ENCODE measurements at regions of chr16 and their contacts with region 1.

Region 1: DNA sequence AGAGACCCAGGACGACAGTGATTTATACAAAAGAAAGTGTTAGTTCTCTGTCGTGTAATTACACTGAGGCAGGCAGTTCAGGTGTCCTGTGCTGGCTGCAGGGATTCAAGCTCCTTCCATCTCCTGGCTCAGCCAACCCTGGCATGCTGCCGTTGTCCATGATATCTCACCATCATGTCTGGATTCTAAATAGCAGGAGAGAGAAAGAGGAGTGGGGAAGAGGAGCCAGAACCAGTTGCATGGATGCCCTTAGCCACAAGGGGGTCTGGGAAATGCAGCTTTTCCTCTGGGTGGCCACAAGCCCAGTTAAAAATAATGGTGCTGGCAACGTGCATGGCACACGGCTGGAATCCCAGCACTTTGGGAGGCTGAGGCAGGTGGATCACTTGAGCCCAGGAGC is 9.7 kb downstream of the C16orf54 start:
- DNase-seq: no peak
- H3K4me3 ChIP-seq: no peak overlapping the region
- H3K27ac ChIP-seq: no peak overlapping the region
- H3K4me1 ChIP-seq: peaks cover 8% of the 10 kb centered on the region
- H3K27me3 ChIP-seq: no peaks in the 10 kb centered on the region
- CTCF ChIP-seq: no peak; the same call in 1 of the 2 replicates

Region 2: DNA sequence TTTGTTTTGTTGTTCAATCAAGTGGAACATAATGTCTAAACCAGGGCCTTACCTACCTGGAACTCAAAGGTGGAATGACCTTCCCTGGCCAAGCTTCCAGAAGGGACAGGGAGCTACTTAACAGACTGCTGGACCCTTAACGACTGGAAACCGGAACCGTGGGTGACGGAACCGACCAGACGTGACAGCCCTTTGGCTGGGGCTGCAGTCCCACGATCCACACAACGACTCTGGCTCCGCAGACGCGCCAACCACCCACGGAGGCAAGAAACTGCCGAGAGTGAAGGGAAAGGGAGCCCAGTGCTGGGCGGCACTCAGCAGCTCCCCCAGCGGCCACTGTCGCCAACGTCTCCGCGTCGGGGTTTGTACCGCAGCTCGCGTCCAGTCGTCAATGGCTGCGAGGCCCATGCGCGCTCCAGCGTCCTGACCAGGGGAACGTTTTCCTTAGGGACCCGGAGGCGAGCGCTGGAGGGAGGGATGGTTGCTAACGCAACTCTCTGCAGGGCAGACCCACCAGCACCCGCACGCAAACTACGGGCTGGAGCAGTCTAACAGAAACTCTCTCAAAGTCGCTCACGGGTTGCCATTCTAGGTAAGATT is 48.9 kb after region 1 on chr16:
- CTCF ChIA-PET with region 1: interaction called, 19 read pairs
- POLR2A ChIA-PET with region 1: interaction called, 5 read pairs
- intact Hi-C with region 1: no loop called
- DNase-seq: no peak
- H3K4me3 ChIP-seq: no peak overlapping the region
- H3K27ac ChIP-seq: no peak overlapping the region
- H3K4me1 ChIP-seq: peaks cover 53% of the 10 kb centered on the region
- H3K27me3 ChIP-seq: no peaks in the 10 kb centered on the region
- CTCF ChIP-seq: no peak

Region 3: DNA sequence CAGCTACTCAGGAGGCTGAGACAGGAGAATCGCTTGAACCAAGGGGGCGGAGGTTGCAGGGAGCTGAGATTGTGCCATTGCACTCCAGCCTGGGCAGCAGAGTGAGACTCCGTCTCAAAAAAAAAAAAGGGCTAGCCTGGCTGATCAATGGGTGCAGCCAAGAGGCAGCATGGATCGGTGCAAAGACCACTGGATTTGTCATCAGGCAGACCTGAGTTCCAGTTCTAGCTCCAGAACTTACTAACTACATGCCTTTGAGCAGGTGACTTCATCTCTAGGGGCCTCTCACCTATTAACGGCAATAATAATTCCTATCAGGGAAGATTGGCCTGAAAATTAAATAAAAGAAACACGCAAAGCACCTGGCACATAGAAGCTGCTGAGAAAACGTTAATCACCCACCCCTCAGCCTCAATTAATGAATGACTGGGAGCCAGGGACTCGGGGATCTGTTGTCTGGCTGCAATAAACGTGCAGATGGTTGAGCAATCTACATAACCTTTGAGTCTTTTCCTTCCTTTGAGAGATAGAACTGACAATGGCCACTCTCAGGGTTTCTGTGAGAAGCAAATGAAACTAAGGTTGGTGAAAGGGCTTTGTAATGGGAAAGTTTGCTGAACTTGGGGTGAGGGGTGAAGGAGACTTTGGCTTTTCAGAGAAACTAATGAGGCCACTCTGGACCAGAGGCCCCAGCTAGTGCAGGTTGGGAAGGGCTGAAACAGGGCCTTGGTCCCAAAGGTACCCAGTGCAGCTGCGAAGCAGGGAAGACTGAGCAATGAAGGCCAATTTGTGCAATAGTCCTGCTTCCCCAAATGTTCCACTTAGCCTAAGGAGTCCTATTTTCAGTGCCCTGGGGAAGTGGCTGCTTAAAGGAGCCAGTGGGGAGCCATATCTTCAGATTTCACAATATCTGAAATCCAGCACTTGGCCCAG is 155.7 kb after region 1 on chr16:
- CTCF ChIA-PET with region 1: no interaction called
- POLR2A ChIA-PET with region 1: no interaction called
- intact Hi-C with region 1: no loop called
- DNase-seq: no peak
- H3K4me3 ChIP-seq: no peak overlapping the region
- H3K27ac ChIP-seq: no peak overlapping the region
- H3K4me1 ChIP-seq: no peaks in the 10 kb centered on the region
- H3K27me3 ChIP-seq: no peaks in the 10 kb centered on the region
- CTCF ChIP-seq: no peak

Measured in PC-9 (cell line).